GM12878 (cell line): ENCODE measurements at regions of chr2 and their contacts with region 1.

Region 1: GRCh38 chr2:34012715-34013302 is 413.7 kb upstream of the FAM98A start:
- DNase-seq: no peak
- ATAC-seq: peak; percentile 88
- H3K4me3 ChIP-seq: no peak overlapping the region
- H3K27ac ChIP-seq: no peak overlapping the region
- H3K4me1 ChIP-seq: no peaks in the 10 kb centered on the region
- H3K27me3 ChIP-seq: no peaks in the 10 kb centered on the region
- CTCF ChIP-seq: peak; percentile 71 to 76 (median 75)
- EP300 ChIP-seq: no peak
- POLR2A ChIP-seq: no peak
- RAD21 ChIP-seq: peak; percentile 74

Region 2: DNA sequence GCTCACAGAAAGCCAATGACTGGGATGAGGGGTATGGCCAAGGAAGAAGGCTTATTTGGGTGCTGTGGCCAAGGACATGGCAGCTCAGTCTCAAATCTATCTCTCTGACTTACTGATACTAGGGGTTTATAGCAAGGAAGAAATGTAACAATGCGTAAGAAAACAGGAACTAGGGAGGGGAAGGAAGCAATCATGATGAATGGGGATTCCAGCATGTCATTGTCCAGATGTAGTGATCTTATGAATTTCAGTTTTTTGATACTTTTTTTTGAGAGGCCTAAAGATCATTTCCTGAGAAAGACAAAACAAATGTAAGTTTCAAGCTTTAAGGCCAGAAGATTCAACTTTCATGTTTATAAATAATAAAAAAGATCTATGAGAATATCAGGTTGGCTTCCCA is 115.1 kb before region 1 on chr2:
- CTCF ChIA-PET with region 1: no interaction called
- POLR2A ChIA-PET with region 1: no interaction called
- RAD21 ChIA-PET with region 1: no interaction called
- SMC1A ChIA-PET with region 1: no interaction called
- in situ Hi-C with region 1: no loop called
- intact Hi-C with region 1: no loop called
- DNase-seq: no peak
- ATAC-seq: no peak
- H3K4me3 ChIP-seq: no peak overlapping the region
- H3K27ac ChIP-seq: no peak overlapping the region
- H3K4me1 ChIP-seq: no peaks in the 10 kb centered on the region
- H3K27me3 ChIP-seq: no peaks in the 10 kb centered on the region
- CTCF ChIP-seq: no peak
- EP300 ChIP-seq: no peak
- POLR2A ChIP-seq: no peak
- RAD21 ChIP-seq: no peak

Region 3: DNA sequence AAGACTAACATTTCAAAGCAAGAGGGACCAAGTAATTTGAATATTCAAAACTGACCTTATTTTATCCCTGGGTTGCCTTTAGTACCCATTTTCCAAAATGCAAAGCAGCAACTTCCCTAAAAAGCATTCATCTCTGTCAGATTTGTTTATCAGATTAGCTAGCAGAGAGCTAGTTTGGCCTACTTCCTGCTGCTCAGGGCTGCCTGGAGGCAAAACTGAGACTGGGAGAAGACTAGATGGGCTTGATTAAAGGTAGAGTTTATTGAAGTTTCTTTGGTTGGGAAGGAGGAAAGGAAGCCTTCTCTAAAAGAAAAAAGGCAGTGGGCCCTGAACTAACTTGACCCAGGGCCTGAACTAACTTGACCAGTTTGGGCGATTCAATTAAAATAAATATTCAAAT is 12.4 kb after region 1 on chr2:
- CTCF ChIA-PET with region 1: interaction called, 10 read pairs
- POLR2A ChIA-PET with region 1: no interaction called
- RAD21 ChIA-PET with region 1: interaction called, 6 read pairs
- SMC1A ChIA-PET with region 1: interaction called, 3 read pairs
- in situ Hi-C with region 1: no loop called
- intact Hi-C with region 1: no loop called
- DNase-seq: no peak
- ATAC-seq: no peak
- H3K4me3 ChIP-seq: no peak overlapping the region
- H3K27ac ChIP-seq: no peak overlapping the region
- H3K4me1 ChIP-seq: no peaks in the 10 kb centered on the region
- H3K27me3 ChIP-seq: no peaks in the 10 kb centered on the region
- CTCF ChIP-seq: no peak
- EP300 ChIP-seq: no peak
- POLR2A ChIP-seq: no peak
- RAD21 ChIP-seq: no peak

Region 4: GRCh38 chr2:34570266-34570872 is 557.6 kb after region 1 on chr2:
- CTCF ChIA-PET with region 1: interaction called, 12 read pairs
- POLR2A ChIA-PET with region 1: no interaction called
- RAD21 ChIA-PET with region 1: no interaction called
- SMC1A ChIA-PET with region 1: interaction called, 4 read pairs
- in situ Hi-C with region 1: no loop called
- intact Hi-C with region 1: loop called (anchors 10 kb)
- DNase-seq: no peak
- ATAC-seq: peak; percentile 96
- H3K4me3 ChIP-seq: no peak overlapping the region
- H3K27ac ChIP-seq: no peak overlapping the region
- H3K4me1 ChIP-seq: no peaks in the 10 kb centered on the region
- H3K27me3 ChIP-seq: no peaks in the 10 kb centered on the region
- CTCF ChIP-seq: peak in 2 of 3 experiments; percentile 45 to 61; a peak in 3 of 6 replicates
- EP300 ChIP-seq: no peak
- POLR2A ChIP-seq: no peak
- RAD21 ChIP-seq: peak; percentile 35

Region 5: DNA sequence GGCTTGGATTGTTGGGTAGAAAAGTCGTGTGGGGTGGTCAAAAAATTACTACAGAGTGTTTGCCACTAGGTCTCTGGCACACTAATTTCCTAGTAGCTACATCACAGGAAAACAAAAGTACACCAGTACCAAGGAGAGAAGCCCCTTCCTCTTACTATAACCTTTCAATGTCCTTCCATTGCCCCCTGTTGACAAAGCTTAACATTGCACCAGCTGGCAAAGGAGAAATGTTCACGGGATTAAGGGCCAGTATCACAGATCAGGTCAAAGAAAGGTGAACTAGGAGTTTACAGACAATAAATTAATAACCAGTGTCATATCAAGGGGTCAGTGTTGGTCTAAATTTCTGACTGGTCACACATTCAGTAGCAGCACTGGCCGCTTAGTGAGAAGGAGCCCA is 725.9 kb after region 1 on chr2:
- CTCF ChIA-PET with region 1: interaction called, 13 read pairs
- POLR2A ChIA-PET with region 1: no interaction called
- RAD21 ChIA-PET with region 1: interaction called, 14 read pairs
- SMC1A ChIA-PET with region 1: interaction called, 5 read pairs
- in situ Hi-C with region 1: no loop called
- intact Hi-C with region 1: loop called (anchors 2 kb)
- DNase-seq: no peak
- ATAC-seq: peak; percentile 63
- H3K4me3 ChIP-seq: no peak overlapping the region
- H3K27ac ChIP-seq: no peak overlapping the region
- H3K4me1 ChIP-seq: no peaks in the 10 kb centered on the region
- H3K27me3 ChIP-seq: no peaks in the 10 kb centered on the region
- CTCF ChIP-seq: peak; percentile 31 to 66 (median 46); a peak in 4 of 6 replicates
- EP300 ChIP-seq: no peak
- POLR2A ChIP-seq: no peak
- RAD21 ChIP-seq: peak; percentile 29; the same call in 1 of the 2 replicates

Region 6: GRCh38 chr2:35343135-35343534 is 1330.3 kb after region 1 on chr2:
- CTCF ChIA-PET with region 1: interaction called, 3 read pairs
- POLR2A ChIA-PET with region 1: no interaction called
- RAD21 ChIA-PET with region 1: no interaction called
- SMC1A ChIA-PET with region 1: no interaction called
- in situ Hi-C with region 1: no loop called
- intact Hi-C with region 1: loop called (anchors 1 kb)
- DNase-seq: no peak
- ATAC-seq: peak; percentile 61; the same call in 2 of the 3 replicates
- H3K4me3 ChIP-seq: no peak overlapping the region
- H3K27ac ChIP-seq: no peak overlapping the region
- H3K4me1 ChIP-seq: no peaks in the 10 kb centered on the region
- H3K27me3 ChIP-seq: no peaks in the 10 kb centered on the region
- CTCF ChIP-seq: peak; percentile 44 to 57 (median 46)
- EP300 ChIP-seq: no peak
- POLR2A ChIP-seq: no peak
- RAD21 ChIP-seq: peak; percentile 37

Region 7: GRCh38 chr2:35428548-35428947 is 1415.7 kb after region 1 on chr2:
- CTCF ChIA-PET with region 1: interaction called, 3 read pairs
- POLR2A ChIA-PET with region 1: no interaction called
- RAD21 ChIA-PET with region 1: no interaction called
- SMC1A ChIA-PET with region 1: interaction called, 3 read pairs
- in situ Hi-C with region 1: loop called (anchors 10 kb)
- intact Hi-C with region 1: loop called (anchors 5 kb)
- DNase-seq: no peak
- ATAC-seq: peak; percentile 82
- H3K4me3 ChIP-seq: no peak overlapping the region
- H3K27ac ChIP-seq: no peak overlapping the region
- H3K4me1 ChIP-seq: no peaks in the 10 kb centered on the region
- H3K27me3 ChIP-seq: no peaks in the 10 kb centered on the region
- CTCF ChIP-seq: peak; percentile 41 to 61 (median 49)
- EP300 ChIP-seq: no peak
- POLR2A ChIP-seq: no peak
- RAD21 ChIP-seq: peak; percentile 17; the same call in 1 of the 2 replicates